ENCODE measurements at regions of chr21 and their contacts with region 1.

Region 1: GRCh38 chr21:46144464-46145070 is 10.8 kb downstream of the FTCD start:
- DNase-seq: no peak
- ATAC-seq: no peak
- H3K4me3 Mint-ChIP-seq: peak overlapping the region; percentile 15
- H3K27ac Mint-ChIP-seq: no peak overlapping the region
- H3K4me1 Mint-ChIP-seq: peaks cover 5% of the 10 kb centered on the region
- H3K27me3 Mint-ChIP-seq: no peaks in the 10 kb centered on the region
- CTCF ChIP-seq: no peak

Region 2: GRCh38 chr21:45973659-45974072 is 170.9 kb before region 1 on chr21:
- CTCF ChIA-PET with region 1: interaction called, 4 read pairs
- POLR2A ChIA-PET with region 1: no interaction called
- intact Hi-C with region 1: loop called (anchors 5 kb)
- DNase-seq: peak; percentile 54
- ATAC-seq: peak; percentile 87
- H3K4me3 Mint-ChIP-seq: peak overlapping the region; percentile 82
- H3K27ac Mint-ChIP-seq: no peak overlapping the region
- H3K4me1 Mint-ChIP-seq: peaks cover 6% of the 10 kb centered on the region
- H3K27me3 Mint-ChIP-seq: peaks cover 25% of the 10 kb centered on the region
- CTCF ChIP-seq: no peak

Region 3: GRCh38 chr21:46128106-46128860 is 16.3 kb before region 1 on chr21:
- CTCF ChIA-PET with region 1: no interaction called
- POLR2A ChIA-PET with region 1: no interaction called
- intact Hi-C with region 1: no loop called
- DNase-seq: no peak
- ATAC-seq: no peak
- H3K4me3 Mint-ChIP-seq: no peak overlapping the region
- H3K27ac Mint-ChIP-seq: no peak overlapping the region
- H3K4me1 Mint-ChIP-seq: no peaks in the 10 kb centered on the region
- H3K27me3 Mint-ChIP-seq: no peaks in the 10 kb centered on the region
- CTCF ChIP-seq: no peak

Region 4: GRCh38 chr21:46184625-46185555 is 40.3 kb after region 1 on chr21:
- CTCF ChIA-PET with region 1: no interaction called
- POLR2A ChIA-PET with region 1: no interaction called
- intact Hi-C with region 1: loop called (anchors 5 kb)
- DNase-seq: peak; percentile 69
- ATAC-seq: peak; percentile 82
- H3K4me3 Mint-ChIP-seq: peak overlapping the region; percentile 89
- H3K27ac Mint-ChIP-seq: peak overlapping the region; percentile 85
- H3K4me1 Mint-ChIP-seq: peaks cover 5% of the 10 kb centered on the region
- H3K27me3 Mint-ChIP-seq: no peaks in the 10 kb centered on the region
- CTCF ChIP-seq: no peak

Region 5: GRCh38 chr21:46228345-46229051 is 83.9 kb after region 1 on chr21 and contains the start of gene LSS:
- CTCF ChIA-PET with region 1: interaction called, 8 read pairs
- POLR2A ChIA-PET with region 1: no interaction called
- intact Hi-C with region 1: loop called (anchors 1 kb)
- DNase-seq: peak; percentile 96
- ATAC-seq: peak; percentile 93
- H3K4me3 Mint-ChIP-seq: peak within 1 kb of the TSS; percentile 99
- H3K27ac Mint-ChIP-seq: peak within 1 kb of the TSS; percentile 97
- H3K4me1 Mint-ChIP-seq: peaks cover 39% of the 10 kb centered on the region
- H3K27me3 Mint-ChIP-seq: no peaks in the 10 kb centered on the region
- CTCF ChIP-seq: no peak
- total RNA-seq, gene LSS: 76.3 and 99.0 TPM in 2 replicates

Region 6: GRCh38 chr21:46253610-46254124 is 109.1 kb after region 1 on chr21:
- CTCF ChIA-PET with region 1: interaction called, 4 read pairs
- POLR2A ChIA-PET with region 1: interaction called, 3 read pairs
- intact Hi-C with region 1: loop called (anchors 10 kb)
- DNase-seq: no peak
- ATAC-seq: peak; percentile 81
- H3K4me3 Mint-ChIP-seq: peak overlapping the region; percentile 62
- H3K27ac Mint-ChIP-seq: peak overlapping the region; percentile 85
- H3K4me1 Mint-ChIP-seq: peaks cover 49% of the 10 kb centered on the region
- H3K27me3 Mint-ChIP-seq: no peaks in the 10 kb centered on the region
- CTCF ChIP-seq: no peak

Region 7: GRCh38 chr21:46285761-46286496 is 141.4 kb after region 1 on chr21 and contains the start of gene YBEY:
- CTCF ChIA-PET with region 1: interaction called, 17 read pairs
- POLR2A ChIA-PET with region 1: interaction called, 11 read pairs
- intact Hi-C with region 1: loop called (anchors 1 kb)
- DNase-seq: peak; percentile 83
- ATAC-seq: peak; percentile 85
- H3K4me3 Mint-ChIP-seq: peak within 1 kb of the TSS; percentile 98
- H3K27ac Mint-ChIP-seq: peak within 1 kb of the TSS; percentile 98
- H3K4me1 Mint-ChIP-seq: peaks cover 49% of the 10 kb centered on the region
- H3K27me3 Mint-ChIP-seq: no peaks in the 10 kb centered on the region
- CTCF ChIP-seq: no peak
- total RNA-seq, gene YBEY: 11.8 and 13.7 TPM in 2 replicates

Region 8: DNA sequence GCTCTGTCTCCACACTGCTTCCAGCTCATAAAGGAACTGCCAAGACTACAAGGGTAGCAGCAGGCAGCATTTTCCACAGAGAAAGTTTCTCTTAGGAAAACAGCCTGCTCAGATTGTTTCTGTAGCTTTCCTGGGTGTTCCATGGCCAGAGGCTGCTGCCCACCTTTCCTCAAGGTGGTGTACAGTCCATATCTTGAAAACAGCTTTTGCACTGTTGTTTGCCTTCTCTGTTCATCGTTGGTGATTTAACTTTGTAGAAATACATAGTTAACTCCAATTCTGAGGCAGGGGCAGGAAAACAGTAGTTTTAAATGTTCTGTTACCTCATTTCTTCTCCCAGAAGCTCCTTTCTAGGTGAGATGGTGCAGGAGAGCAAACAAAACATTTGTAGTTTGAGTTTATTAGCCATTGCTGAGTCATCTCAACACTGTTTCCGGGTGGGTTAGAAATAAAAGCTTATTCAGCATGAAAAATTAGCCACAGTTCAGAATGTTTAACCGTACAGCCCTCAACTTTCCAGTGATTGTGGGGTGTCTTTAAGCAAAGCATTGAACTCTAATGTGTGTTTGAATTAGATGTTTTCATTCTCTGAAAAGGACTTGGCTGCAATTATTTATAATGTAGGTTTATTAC is 355.8 kb after region 1 on chr21:
- CTCF ChIA-PET with region 1: interaction called, 3 read pairs
- POLR2A ChIA-PET with region 1: no interaction called
- intact Hi-C with region 1: loop called (anchors 5 kb)
- DNase-seq: no peak
- ATAC-seq: no peak
- H3K4me3 Mint-ChIP-seq: no peak overlapping the region
- H3K27ac Mint-ChIP-seq: peak overlapping the region; percentile 21
- H3K4me1 Mint-ChIP-seq: peaks cover 31% of the 10 kb centered on the region
- H3K27me3 Mint-ChIP-seq: no peaks in the 10 kb centered on the region
- CTCF ChIP-seq: no peak